Activated CD8-positive, alpha-beta memory T cell treated with anti-CD3 and anti-CD28 coated beads, Interleukin-2, amount 10 ng/mL, durations not matched to agents 7 days and 5 days (primary cell): ENCODE measurements at regions of chr10 and their contacts with region 1.

Region 1: DNA sequence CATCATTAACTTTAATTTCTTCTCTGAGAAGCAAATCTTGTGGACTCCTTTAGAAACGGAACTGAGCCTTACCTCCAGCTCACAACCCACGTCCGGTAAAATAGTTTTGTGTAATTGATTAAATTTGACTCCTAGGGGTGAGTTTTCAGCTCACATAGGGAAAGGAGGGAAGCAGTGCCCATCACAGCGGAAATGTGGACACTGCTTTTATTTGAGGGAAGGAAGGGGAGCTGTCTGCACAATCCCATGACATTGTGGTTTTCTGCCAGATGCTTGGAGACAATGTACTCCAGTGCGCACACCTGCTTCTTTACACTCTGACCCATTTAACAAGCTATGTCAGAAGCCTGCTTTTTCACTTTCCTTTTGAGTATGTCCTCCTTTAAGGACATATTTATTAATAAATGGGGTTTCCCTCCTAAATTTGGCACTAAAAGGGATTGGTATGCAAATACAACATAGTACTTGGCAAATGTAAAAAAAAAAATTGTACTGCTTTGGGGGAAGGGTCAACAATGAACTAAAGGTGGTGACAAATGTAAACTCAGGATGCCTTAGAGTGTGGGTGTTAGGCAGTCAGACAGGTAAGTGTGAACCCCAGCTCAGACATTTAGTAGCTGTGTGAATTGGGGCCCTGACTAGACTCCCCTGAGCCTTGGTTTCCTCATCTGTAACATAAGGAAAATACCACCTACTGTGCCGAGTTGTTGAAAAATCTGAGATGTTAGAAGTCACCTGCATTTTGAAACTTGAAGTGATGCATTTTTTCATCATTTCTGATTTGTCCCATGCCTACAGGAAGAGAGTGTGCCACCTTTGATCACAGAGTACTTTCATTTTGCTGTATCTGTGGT is 90.2 kb upstream of the KLF6 start:
- DNase-seq: no peak
- ATAC-seq: peak; percentile 46
- H3K4me3 Mint-ChIP-seq: peak overlapping the region; percentile 47
- H3K27ac Mint-ChIP-seq: peak overlapping the region; percentile 83
- H3K4me1 Mint-ChIP-seq: peaks cover 49% of the 10 kb centered on the region
- H3K27me3 Mint-ChIP-seq: no peaks in the 10 kb centered on the region

Region 2: DNA sequence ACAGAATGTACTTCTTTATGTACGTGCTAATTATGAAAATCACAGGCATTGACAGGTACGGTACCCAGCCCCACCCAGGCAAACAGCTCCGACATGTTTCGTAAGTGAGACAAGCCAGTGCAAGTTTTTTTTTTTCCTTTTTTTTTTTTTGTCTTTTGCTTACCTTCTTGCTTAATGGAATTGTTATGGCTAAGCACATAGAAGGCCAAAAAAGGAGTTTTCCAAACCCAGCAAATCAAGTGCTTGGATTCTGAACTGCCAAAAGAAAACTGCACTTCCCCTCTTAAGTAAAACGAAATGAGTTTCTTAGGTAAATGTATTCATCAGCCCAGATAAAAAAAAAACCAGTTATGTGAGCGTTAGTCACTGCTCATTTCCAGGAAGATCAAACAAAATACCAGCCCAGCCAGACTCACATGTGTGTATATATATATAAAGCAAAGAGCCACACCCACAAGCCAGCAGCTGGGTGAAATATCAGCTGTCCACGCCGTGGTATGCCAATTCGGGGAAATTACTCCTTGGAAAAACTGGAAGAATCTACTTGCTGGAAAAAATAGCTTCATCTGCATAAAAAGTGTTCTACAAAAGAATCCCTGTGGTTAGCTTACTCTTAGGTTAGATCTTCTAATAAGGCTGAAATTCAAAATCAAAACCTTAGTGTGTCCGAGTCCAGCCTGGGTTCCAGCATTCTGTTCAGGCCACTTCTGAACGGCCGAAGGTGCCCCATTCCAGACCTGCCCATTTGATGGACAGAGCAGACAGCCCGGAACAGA is 98.2 kb before region 1 on chr10:
- CTCF ChIA-PET with region 1: no interaction called
- DNase-seq: peak; percentile 71
- ATAC-seq: peak; percentile 20
- H3K4me3 Mint-ChIP-seq: peak overlapping the region; percentile 48
- H3K27ac Mint-ChIP-seq: peak overlapping the region; percentile 71
- H3K4me1 Mint-ChIP-seq: peaks cover 62% of the 10 kb centered on the region
- H3K27me3 Mint-ChIP-seq: no peaks in the 10 kb centered on the region

Region 3: GRCh38 chr10:3892440-3893425 is 17.5 kb after region 1 on chr10:
- CTCF ChIA-PET with region 1: interaction called, 10 read pairs
- DNase-seq: peak; percentile 43
- ATAC-seq: peak; percentile 72
- H3K4me3 Mint-ChIP-seq: no peak overlapping the region
- H3K27ac Mint-ChIP-seq: peak overlapping the region; percentile 82
- H3K4me1 Mint-ChIP-seq: peaks cover 49% of the 10 kb centered on the region
- H3K27me3 Mint-ChIP-seq: no peaks in the 10 kb centered on the region